ENCODE measurements at regions of chr5 and their contacts with region 1.

Region 1: GRCh38 chr5:89377767-89378455 is 494.9 kb upstream of the MEF2C start:
- DNase-seq: peak; percentile 5
- ATAC-seq: no peak
- H3K4me3 ChIP-seq: no peak overlapping the region
- H3K27ac ChIP-seq: no peak overlapping the region
- H3K4me1 ChIP-seq: 0 out of 2 replicates have a peak, but pooled peaks cover 6% of the 10 kb centered on the region
- H3K27me3 ChIP-seq: no peaks in the 10 kb centered on the region
- CTCF ChIP-seq: no peak

Region 2: DNA sequence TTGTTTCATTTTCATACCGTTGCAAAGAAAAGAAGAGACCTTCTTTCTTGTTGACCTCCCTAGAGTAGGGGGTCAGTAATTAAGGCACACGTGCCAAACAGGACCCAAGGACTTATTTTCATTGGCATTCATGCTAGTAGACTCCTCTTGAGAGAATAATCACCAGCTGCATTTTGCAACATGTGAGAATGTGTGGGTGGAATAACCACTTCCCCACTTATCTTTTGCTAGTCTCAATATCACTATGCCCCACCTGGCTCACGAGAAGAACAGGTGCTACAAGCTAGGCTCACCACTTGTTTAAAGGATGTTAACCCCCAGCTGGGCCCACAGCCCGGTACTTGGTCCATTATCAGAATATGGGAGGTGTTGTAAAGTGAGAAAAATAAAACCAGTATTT is 34.2 kb before region 1 on chr5:
- CTCF ChIA-PET with region 1: no interaction called
- POLR2A ChIA-PET with region 1: no interaction called
- intact Hi-C with region 1: loop called (anchors 2 kb)
- DNase-seq: no peak
- ATAC-seq: no peak
- H3K4me3 ChIP-seq: no peak overlapping the region
- H3K27ac ChIP-seq: no peak overlapping the region
- H3K4me1 ChIP-seq: no peaks in the 10 kb centered on the region; the same call in 1 of the 2 replicates
- H3K27me3 ChIP-seq: no peaks in the 10 kb centered on the region
- CTCF ChIP-seq: no peak

Region 3: GRCh38 chr5:89437450-89438435 is 59.8 kb after region 1 on chr5:
- CTCF ChIA-PET with region 1: no interaction called
- POLR2A ChIA-PET with region 1: no interaction called
- intact Hi-C with region 1: no loop called
- DNase-seq: peak; percentile 67
- ATAC-seq: no peak; the same call in 1 of the 2 replicates
- H3K4me3 ChIP-seq: no peak overlapping the region
- H3K27ac ChIP-seq: peak overlapping the region; percentile 61
- H3K4me1 ChIP-seq: peaks cover 11% of the 10 kb centered on the region
- H3K27me3 ChIP-seq: no peaks in the 10 kb centered on the region
- CTCF ChIP-seq: no peak